ENCODE measurements at regions of chr5 and their contacts with region 1.

Region 1: DNA sequence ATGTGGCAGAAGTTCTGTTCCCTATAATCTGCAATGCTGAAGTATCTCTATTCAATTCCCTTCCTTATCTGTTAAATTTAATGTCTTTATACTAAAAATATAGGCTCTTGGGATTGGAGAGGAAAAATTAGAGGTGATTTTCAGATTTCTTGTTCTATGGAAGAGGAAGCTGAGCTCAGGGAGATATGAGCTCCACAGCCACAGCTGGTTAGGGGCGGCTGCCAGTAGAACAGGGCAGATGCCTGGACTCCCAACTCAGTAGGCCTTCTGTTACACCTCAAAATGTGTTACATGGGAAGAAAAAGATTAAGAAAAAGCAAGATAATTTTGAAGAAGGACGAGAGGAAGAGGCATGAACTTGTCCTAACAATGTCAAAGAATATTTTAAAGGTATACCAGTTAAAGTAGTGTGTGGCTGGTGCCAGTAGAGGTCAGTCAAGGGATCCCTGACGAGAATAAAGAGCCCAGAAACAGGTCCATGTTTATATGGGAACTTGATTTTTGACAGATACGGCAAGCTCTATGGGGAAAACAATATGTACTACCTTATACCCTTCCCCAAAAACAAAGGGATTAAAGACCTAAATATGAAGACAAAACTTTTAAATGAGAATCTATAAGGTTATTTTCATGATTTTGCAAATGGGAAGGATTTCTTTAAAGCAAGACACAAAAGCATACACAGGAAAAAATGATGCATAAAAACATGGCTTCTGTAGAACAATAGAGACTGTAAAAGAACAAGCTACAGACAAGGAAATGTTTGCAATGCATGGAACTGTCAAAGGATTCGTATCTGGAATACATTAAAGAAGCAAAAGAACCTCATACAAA is 28.7 kb downstream of the DNAJC21 start:
- DNase-seq: peak; percentile 24
- H3K4me3 Mint-ChIP-seq: no peak overlapping the region
- H3K27ac Mint-ChIP-seq: peak overlapping the region; percentile 18
- H3K4me1 Mint-ChIP-seq: no peaks in the 10 kb centered on the region
- H3K27me3 Mint-ChIP-seq: no peaks in the 10 kb centered on the region
- CTCF ChIP-seq: no peak

Region 2: DNA sequence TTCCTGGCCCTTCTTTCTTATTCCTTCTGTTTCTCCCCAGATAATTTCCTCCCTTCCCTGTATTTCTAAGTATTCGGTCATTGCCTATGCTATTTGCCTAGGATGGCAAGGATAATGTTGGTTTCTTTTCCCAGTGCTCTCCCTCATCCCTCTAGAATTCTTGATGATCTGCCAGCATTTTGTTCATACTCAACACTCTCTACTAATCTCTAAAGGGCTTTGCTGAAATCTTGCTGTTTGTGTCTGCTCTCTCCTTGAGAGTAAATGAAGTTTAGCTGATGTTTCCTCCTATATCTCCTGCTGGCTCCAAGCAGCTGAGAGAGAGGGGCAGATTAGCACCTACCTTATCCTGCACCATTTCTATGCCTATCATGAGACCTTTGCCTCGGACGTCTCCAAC is 51.6 kb after region 1 on chr5:
- CTCF ChIA-PET with region 1: no interaction called
- intact Hi-C with region 1: no loop called
- DNase-seq: no peak
- H3K4me3 Mint-ChIP-seq: no peak overlapping the region
- H3K27ac Mint-ChIP-seq: no peak overlapping the region
- H3K4me1 Mint-ChIP-seq: no peaks in the 10 kb centered on the region
- H3K27me3 Mint-ChIP-seq: peaks cover 51% of the 10 kb centered on the region
- CTCF ChIP-seq: no peak

Region 3: DNA sequence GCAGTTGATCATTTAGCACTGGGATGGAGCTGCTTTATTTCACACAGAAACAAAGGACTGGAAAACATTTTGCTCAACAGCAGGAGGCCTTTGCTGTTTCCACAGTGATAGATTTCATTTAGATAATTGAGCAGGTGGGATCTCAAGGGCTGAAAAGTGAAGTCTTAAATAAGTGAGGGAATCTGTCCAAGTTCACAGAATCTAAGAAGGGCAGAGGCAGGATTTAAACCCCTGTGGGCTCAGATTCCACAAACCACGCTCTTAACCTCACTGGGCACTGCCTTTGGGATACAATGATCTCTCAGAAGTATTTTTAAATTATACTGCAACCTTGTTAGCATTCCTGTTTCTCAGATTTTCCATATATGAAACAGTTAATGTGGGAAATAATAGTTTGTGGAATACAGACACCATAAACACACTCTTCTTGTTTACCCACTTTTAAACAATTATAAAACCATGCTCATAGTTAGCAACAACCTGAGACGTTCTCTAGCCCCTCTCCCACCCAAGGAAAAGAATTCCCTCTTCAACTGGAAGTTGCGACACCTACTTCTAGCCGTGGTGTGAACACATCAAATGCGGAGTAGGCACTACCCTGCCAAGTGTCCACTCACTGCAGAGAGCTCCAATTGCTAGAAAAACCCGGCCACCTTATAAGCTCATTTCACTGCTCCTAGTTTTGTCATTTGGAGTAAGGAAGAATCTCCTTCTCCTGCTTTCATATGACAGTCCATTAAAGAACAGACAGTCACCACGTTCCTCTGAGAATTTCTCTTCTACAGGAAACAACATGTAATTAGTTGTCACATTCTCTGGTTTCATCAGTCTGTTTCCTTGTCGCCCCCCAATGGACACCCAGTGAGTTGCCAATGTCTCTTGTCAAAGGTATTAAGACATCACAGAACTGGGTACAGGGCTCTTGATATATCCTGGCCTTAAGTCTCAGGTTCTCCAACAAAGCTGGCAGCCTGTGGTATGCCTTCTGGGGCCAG is 224.8 kb after region 1 on chr5:
- CTCF ChIA-PET with region 1: no interaction called
- intact Hi-C with region 1: no loop called
- DNase-seq: peak; percentile 44
- H3K4me3 Mint-ChIP-seq: no peak overlapping the region
- H3K27ac Mint-ChIP-seq: no peak overlapping the region
- H3K4me1 Mint-ChIP-seq: peaks cover 8% of the 10 kb centered on the region
- H3K27me3 Mint-ChIP-seq: peaks cover 5% of the 10 kb centered on the region
- CTCF ChIP-seq: no peak

Region 4: GRCh38 chr5:35202319-35203111 is 244.4 kb after region 1 on chr5:
- CTCF ChIA-PET with region 1: no interaction called
- intact Hi-C with region 1: loop called (anchors 10 kb)
- DNase-seq: peak; percentile 59
- H3K4me3 Mint-ChIP-seq: no peak overlapping the region
- H3K27ac Mint-ChIP-seq: no peak overlapping the region
- H3K4me1 Mint-ChIP-seq: no peaks in the 10 kb centered on the region
- H3K27me3 Mint-ChIP-seq: peaks cover 26% of the 10 kb centered on the region
- CTCF ChIP-seq: peak; percentile 29

Measured in Calu3 (cell line).